KBM-7 (cell line): ENCODE measurements at regions of chr2 and their contacts with region 1.

Region 1: DNA sequence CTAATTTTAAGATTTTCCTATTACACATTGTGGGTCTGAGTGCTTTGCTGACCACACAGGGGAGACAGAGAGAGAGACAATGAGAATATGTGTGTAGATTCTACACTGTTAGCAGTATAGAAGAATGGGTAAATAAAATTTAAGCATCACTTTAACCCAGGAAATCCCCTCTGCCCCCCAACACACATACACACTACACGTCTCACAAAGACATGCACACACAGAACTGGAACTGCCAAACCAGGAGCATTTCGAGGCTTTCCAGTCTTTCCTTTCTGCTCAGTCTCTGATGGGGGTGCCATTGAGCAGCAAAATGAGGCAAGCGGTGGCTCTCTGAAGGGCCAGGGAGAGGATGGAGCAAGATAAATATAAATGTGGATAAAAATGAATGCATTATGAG is 2.5 kb downstream of the MERTK start:
- DNase-seq: peak; percentile 68

Region 2: DNA sequence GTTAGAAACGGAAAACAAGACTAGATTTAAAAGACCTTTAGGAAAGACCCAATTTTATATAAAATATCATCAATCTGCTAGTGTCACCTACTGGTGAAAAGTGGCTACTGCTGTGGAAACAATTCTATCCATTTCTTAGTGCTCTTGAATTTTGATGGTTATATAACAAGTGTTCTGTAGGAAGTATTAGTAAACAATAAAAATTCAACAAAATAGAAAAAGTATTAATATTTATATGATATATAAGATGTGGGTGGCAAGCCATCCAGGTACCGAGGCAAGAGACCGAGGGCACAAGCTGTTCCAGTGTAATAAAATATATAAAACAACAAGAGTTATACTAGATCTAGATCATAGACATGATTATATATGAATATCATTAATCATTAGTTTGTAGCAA is 148.0 kb after region 1 on chr2:
- in situ Hi-C with region 1: loop called (anchors 25 kb)
- DNase-seq: peak; percentile 81